Astrocyte of the cerebellum (primary cell): ENCODE measurements at regions of chr15 and their contacts with region 1.

Region 1: GRCh38 chr15:38002883-38003477 is 68.5 kb downstream of the TMCO5A start:
- DNase-seq: peak; percentile 69
- H3K4me3 ChIP-seq: no peak overlapping the region
- CTCF ChIP-seq: peak; percentile 75

Region 2: DNA sequence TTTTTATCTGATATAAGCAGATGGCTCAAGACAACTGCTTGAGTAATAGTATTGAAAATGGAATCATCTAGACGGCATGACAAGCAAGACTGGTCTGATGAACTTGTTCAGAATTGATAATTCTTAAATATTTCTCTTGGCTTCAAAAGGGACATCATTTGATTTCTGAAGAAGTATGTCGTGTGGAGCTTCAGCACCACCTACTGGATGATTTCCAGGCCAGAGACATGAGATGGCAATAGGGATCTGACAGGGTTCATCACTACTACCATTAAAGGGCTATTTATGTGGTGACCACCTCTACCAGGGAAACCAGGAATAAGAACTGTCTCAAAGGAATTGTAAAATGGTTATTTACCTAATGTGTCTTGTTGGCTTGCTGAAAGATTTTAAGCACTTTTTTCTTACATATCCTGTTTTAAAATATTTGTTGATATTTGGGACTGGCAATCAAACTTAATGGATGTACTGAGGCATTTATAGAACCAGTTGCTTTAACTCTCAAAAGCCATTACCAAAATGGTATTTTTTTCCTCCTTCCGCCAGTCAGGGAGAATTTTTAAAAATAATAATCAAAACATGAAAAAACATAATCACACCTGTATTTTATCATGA is 351.4 kb after region 1 on chr15:
- in situ Hi-C with region 1: loop called (anchors 25 kb)
- DNase-seq: peak; percentile 59
- H3K4me3 ChIP-seq: no peak overlapping the region
- CTCF ChIP-seq: peak; percentile 76

Region 3: DNA sequence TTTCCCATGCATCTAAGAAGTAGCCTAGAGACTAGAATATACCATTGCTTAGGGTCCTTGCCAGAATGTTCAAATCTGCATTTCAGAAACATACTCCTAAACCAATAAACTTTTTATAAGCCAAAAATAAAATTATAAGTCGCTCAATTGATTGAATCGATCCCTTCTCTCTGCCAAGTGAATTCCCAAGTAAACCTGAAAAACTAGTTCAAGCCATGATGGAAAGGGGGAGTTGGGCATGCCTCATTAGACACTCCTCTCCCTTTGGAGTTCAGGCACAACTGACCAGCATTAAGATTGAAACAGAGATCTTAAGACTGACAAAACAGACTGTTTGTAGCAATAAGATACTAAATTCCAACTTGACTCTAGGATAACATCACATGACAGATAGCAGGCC is 675.3 kb after region 1 on chr15:
- in situ Hi-C with region 1: loop called (anchors 5 kb)
- DNase-seq: no peak
- H3K4me3 ChIP-seq: no peak overlapping the region
- CTCF ChIP-seq: no peak